ENCODE measurements at regions of chr16 and their contacts with region 1.

Region 1: GRCh38 chr16:89490387-89491237 is at the start of gene ANKRD11:
- DNase-seq: peak; percentile 96 to 100 (median 98)
- ATAC-seq: peak; percentile 85
- H3K4me3 ChIP-seq: peak within 1 kb of the TSS; percentile 73
- H3K4me3 Mint-ChIP-seq: peak within 1 kb of the TSS; percentile 98
- H3K27ac ChIP-seq: peak within 1 kb of the TSS; percentile 81 to 95
- H3K27ac Mint-ChIP-seq: peak within 1 kb of the TSS; percentile 97
- H3K4me1 ChIP-seq: peaks cover 58% of the 10 kb centered on the region
- H3K4me1 Mint-ChIP-seq: peaks cover 59% of the 10 kb centered on the region
- H3K27me3 ChIP-seq: no peaks in the 10 kb centered on the region
- H3K27me3 Mint-ChIP-seq: no peaks in the 10 kb centered on the region
- CTCF ChIP-seq: no peak
- total RNA-seq, gene ANKRD11: 200 to 211 TPM

Region 2: DNA sequence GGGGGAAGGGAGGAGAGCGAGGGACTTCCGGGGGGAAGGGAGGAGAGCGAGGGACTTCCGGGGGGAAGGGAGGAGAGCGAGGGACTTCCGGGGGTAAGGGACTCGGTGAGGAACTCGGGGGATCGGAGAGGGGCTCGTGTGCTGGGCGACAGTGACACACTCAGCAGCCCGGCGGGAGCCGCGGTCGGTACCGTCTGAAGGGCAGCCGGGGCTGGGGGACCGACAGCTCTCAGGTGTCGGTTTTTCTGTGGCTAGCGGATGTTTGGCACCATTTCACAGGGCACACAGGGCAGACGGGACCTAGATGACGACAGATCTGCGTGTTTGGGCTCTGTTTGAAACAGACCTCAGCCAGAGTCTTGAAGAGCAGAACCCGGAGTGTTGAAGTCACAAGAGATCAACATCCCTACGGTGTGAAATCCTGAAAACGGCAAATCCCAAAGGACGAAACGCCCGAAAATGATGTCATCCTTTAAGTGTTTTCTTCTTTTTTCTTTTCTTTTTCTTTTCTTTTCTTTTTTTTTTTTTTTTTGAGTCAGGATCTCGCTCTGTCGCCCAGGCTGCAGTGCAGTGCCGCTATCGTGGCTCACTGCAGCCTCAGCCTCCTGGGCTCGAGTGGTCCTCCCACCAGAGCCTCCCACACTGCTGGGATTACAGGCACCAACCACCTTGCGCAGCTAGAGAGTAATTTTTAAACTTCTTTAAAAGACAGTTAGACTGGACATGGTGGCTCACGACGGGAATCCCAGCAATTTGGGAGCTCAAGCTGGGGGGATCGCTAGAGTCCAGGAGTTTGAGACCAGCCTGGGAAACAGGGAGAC is 249.2 kb before region 1 on chr16:
- CTCF ChIA-PET with region 1: no interaction called
- POLR2A ChIA-PET with region 1: no interaction called
- intact Hi-C with region 1: loop called in 1 of 2 experiments (anchors 5 kb)
- DNase-seq: peak; percentile 62 to 96 (median 78)
- ATAC-seq: peak; percentile 84
- H3K4me3 ChIP-seq: peak overlapping the region; percentile 67
- H3K4me3 Mint-ChIP-seq: peak overlapping the region; percentile 92
- H3K27ac ChIP-seq: peak overlapping the region; percentile 90 to 97
- H3K27ac Mint-ChIP-seq: peak overlapping the region; percentile 97
- H3K4me1 ChIP-seq: peaks cover 25% of the 10 kb centered on the region
- H3K4me1 Mint-ChIP-seq: peaks cover 16% of the 10 kb centered on the region
- H3K27me3 ChIP-seq: no peaks in the 10 kb centered on the region
- H3K27me3 Mint-ChIP-seq: no peaks in the 10 kb centered on the region
- CTCF ChIP-seq: no peak

Region 3: DNA sequence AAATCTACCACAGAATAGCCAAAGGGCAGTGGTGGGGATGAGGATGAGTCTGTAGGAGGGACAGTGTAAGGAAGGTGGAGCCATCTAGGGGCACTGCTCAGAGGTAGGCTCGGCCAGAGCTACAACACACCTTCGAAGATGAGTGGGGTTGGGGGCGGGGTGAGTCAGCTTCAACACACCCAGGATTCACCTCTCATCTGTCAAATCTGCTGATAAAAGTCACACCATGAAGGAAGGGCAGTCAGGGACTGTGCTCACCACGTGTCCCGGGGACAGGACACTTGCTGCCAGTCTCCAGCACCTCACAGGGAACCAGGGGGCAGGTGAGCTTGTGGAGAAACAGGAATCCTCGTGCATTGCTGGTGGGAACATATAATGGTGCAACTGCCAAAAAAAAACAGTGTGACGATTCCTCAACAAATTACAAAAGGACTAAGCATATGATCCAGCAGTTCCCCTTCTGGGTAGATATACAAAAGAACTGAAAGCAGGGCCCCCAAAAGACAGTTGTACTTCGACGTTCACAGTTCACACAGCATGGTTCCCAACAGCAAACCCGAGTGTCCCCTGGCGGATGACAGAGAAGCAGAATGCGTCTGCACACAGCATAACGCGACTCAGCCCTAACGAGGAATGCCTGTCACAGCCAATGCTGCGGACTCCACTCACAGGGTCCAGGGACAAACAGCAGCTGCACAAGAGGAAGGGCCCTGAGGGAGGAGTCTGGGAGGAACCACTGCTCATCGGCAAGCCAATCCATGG is 133.4 kb before region 1 on chr16:
- CTCF ChIA-PET with region 1: no interaction called
- POLR2A ChIA-PET with region 1: interaction called, 12 read pairs
- intact Hi-C with region 1: no loop called
- DNase-seq: peak in 9 of 14 experiments; percentile 23 to 67 (median 38)
- ATAC-seq: no peak
- H3K4me3 ChIP-seq: no peak overlapping the region
- H3K4me3 Mint-ChIP-seq: peak overlapping the region; percentile 81
- H3K27ac ChIP-seq: no peak overlapping the region
- H3K27ac Mint-ChIP-seq: peak overlapping the region; percentile 87
- H3K4me1 ChIP-seq: peaks cover 95% of the 10 kb centered on the region
- H3K4me1 Mint-ChIP-seq: peaks cover 91% of the 10 kb centered on the region
- H3K27me3 ChIP-seq: no peaks in the 10 kb centered on the region
- H3K27me3 Mint-ChIP-seq: no peaks in the 10 kb centered on the region
- CTCF ChIP-seq: no peak

Region 4: DNA sequence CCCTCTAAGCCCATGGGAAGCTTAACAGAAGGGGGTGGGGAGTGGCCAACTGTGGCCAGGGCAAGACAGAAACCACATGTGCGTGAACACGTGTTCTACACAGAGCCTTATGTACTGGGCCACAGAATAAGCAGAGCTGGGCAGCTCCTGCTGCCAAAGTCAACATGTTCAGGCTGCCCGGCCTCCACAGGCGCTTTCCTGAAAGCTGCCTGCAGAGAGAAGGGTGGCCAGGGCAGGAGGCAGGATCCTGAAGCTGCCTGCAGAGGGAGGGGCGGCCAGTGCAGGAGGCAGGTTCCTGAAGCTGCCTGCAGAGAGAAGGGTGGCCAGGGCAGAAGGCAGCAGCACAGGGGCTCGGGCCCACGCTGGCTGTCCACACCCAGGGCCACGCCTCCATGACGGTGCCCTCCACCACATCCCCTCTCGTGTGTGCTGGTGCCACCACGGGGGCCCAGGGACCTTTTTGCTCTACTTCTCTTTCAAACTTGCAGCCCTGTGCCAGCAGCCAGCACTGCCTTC is 79.8 kb before region 1 on chr16:
- CTCF ChIA-PET with region 1: interaction called, 4 read pairs
- POLR2A ChIA-PET with region 1: interaction called, 4 read pairs
- intact Hi-C with region 1: loop called (anchors 2 to 5 kb)
- DNase-seq: peak in 5 of 14 experiments; percentile 28 to 54 (median 34)
- ATAC-seq: no peak
- H3K4me3 ChIP-seq: no peak overlapping the region
- H3K4me3 Mint-ChIP-seq: peak overlapping the region; percentile 54
- H3K27ac ChIP-seq: peak overlapping the region; percentile 34 to 69
- H3K27ac Mint-ChIP-seq: peak overlapping the region; percentile 95
- H3K4me1 ChIP-seq: peaks cover 92% of the 10 kb centered on the region
- H3K4me1 Mint-ChIP-seq: peaks cover 87% of the 10 kb centered on the region
- H3K27me3 ChIP-seq: no peaks in the 10 kb centered on the region
- H3K27me3 Mint-ChIP-seq: no peaks in the 10 kb centered on the region
- CTCF ChIP-seq: no peak

Region 5: GRCh38 chr16:89507834-89508590 is 17.4 kb after region 1 on chr16 and contains the start of gene SPG7:
- CTCF ChIA-PET with region 1: interaction called, 5 read pairs
- POLR2A ChIA-PET with region 1: interaction called, 40 read pairs
- intact Hi-C with region 1: loop called (anchors 1 kb)
- DNase-seq: peak; percentile 81 to 97 (median 90)
- ATAC-seq: peak; percentile 71
- H3K4me3 ChIP-seq: peak within 1 kb of the TSS; percentile 73
- H3K4me3 Mint-ChIP-seq: peak within 1 kb of the TSS; percentile 95
- H3K27ac ChIP-seq: peak within 1 kb of the TSS; percentile 79 to 81
- H3K27ac Mint-ChIP-seq: peak within 1 kb of the TSS; percentile 93
- H3K4me1 ChIP-seq: peaks cover 47% of the 10 kb centered on the region
- H3K4me1 Mint-ChIP-seq: peaks cover 42% of the 10 kb centered on the region
- H3K27me3 ChIP-seq: no peaks in the 10 kb centered on the region
- H3K27me3 Mint-ChIP-seq: no peaks in the 10 kb centered on the region
- CTCF ChIP-seq: no peak
- total RNA-seq, gene SPG7: 163 to 167 TPM

Region 6: DNA sequence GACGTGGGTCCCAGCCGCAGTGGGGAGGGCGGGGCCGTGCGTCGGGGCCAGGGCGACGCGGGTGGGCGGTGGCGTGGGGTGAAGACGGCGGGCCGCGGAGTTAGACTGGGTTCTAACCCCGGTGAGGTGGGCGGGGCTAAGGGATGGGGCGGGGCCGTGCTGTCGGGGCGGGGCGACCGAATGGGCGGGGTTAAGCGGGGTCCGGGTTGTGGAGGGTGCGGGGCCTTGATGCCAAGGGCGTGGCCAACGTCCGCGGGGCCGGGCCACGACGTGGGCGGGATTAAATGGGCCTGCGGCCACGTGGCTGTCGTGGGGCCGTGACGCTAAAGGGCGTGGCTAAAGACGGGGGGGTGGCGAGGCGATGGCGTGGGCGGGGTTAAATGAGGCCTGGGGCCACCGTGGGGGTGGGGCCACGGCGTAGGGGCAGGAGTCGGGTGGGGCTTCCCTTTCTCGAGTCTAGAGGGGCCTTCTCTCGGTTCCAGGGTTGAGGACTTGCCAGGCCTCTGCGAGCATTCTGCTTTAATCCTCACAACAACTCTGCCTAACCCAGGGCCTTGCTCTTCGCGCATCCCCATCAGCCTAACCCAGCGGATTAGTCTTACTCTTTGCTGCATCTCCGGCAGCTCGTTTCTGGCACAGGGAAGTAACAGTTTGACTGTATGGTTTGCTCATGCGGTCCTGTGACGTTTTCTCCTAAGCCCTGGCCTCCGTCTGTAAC is 383.5 kb after region 1 on chr16:
- CTCF ChIA-PET with region 1: no interaction called
- POLR2A ChIA-PET with region 1: no interaction called
- intact Hi-C with region 1: loop called in 1 of 2 experiments (anchors 5 kb)
- DNase-seq: peak; percentile 88 to 98 (median 95)
- ATAC-seq: peak; percentile 78
- H3K4me3 ChIP-seq: peak overlapping the region; percentile 98
- H3K4me3 Mint-ChIP-seq: peak overlapping the region; percentile 87
- H3K27ac ChIP-seq: peak overlapping the region; percentile 99 to 100
- H3K27ac Mint-ChIP-seq: peak overlapping the region; percentile 79
- H3K4me1 ChIP-seq: peaks cover 23% of the 10 kb centered on the region
- H3K4me1 Mint-ChIP-seq: peaks cover 14% of the 10 kb centered on the region
- H3K27me3 ChIP-seq: no peaks in the 10 kb centered on the region
- H3K27me3 Mint-ChIP-seq: no peaks in the 10 kb centered on the region
- CTCF ChIP-seq: no peak